K562 (cell line): ENCODE measurements at regions of chr5 and their contacts with region 1.

Region 1: DNA sequence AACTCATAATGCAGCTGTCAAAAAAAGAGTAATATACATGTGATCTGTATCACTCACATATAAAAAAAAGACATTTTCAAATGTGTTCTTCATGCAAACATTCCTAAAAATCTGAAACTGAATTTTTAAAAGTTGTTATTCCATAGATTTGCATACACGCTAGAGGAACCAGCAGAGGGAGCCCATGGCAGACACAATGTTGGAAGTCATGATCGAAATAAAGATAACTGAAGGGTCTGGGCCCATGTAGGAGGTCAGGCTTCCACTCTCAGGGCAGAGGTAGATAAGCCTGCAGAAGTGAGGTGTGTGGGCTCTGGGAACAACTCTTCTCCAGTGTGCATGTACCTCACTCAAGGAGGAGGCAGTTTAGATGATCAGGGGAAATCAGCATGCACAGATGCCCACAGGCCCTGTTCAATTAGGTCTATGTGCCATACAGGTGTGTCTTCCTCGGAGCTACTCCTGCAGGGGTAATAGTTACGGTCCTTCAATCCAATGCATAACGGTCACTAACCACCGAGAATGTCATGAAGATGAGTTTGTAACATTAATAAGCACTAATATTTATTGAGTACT is 208.6 kb downstream of the EPB41L4A start:
- DNase-seq: peak in 3 of 4 experiments; percentile 11 to 66 (median 20)
- ATAC-seq: peak; percentile 80
- H3K4me3 ChIP-seq: no peak overlapping the region
- H3K27ac ChIP-seq: no peak overlapping the region
- H3K4me1 ChIP-seq: peaks cover 0 to 6% of the 10 kb centered on the region in 2 experiments; a peak in 3 of 5 replicates
- H3K27me3 ChIP-seq: no peaks in the 10 kb centered on the region
- CTCF ChIP-seq: peak; percentile 46 to 74 (median 64); a peak in 5 of 6 replicates
- EP300 ChIP-seq: no peak
- POLR2A ChIP-seq: no peak
- RAD21 ChIP-seq: peak; percentile 57 to 67

Region 2: GRCh38 chr5:112276983-112277382 is 66.5 kb after region 1 on chr5:
- CTCF ChIA-PET with region 1: no interaction called
- POLR2A ChIA-PET with region 1: no interaction called
- in situ Hi-C with region 1: no loop called
- intact Hi-C with region 1: no loop called
- DNase-seq: no peak
- ATAC-seq: no peak
- H3K4me3 ChIP-seq: no peak overlapping the region
- H3K27ac ChIP-seq: no peak overlapping the region
- H3K4me1 ChIP-seq: no peaks in the 10 kb centered on the region
- H3K27me3 ChIP-seq: no peaks in the 10 kb centered on the region; a peak in 1 of 5 replicates
- CTCF ChIP-seq: no peak
- EP300 ChIP-seq: no peak
- POLR2A ChIP-seq: no peak
- RAD21 ChIP-seq: no peak

Region 3: GRCh38 chr5:112419986-112420864 is 209.7 kb after region 1 on chr5:
- CTCF ChIA-PET with region 1: no interaction called
- POLR2A ChIA-PET with region 1: interaction called, 3 read pairs
- in situ Hi-C with region 1: no loop called
- intact Hi-C with region 1: loop called (anchors 2 kb)
- DNase-seq: peak; percentile 61 to 78 (median 72)
- ATAC-seq: peak; percentile 100
- H3K4me3 ChIP-seq: peak overlapping the region; percentile 42
- H3K27ac ChIP-seq: no peak overlapping the region
- H3K4me1 ChIP-seq: peaks cover 0 to 20% of the 10 kb centered on the region in 2 experiments; a peak in 3 of 5 replicates
- H3K27me3 ChIP-seq: peaks cover 4 to 33% of the 10 kb centered on the region in 2 experiments; a peak in 4 of 5 replicates
- CTCF ChIP-seq: peak; percentile 80 to 95 (median 84)
- EP300 ChIP-seq: no peak
- POLR2A ChIP-seq: no peak
- RAD21 ChIP-seq: peak; percentile 80 to 81